ENCODE measurements at regions of chr16 and their contacts with region 1.

Region 1: GRCh38 chr16:86575754-86576557 is 2.4 kb upstream of the FOXL1 start:
- DNase-seq: peak; percentile 97
- H3K4me3 Mint-ChIP-seq: peak overlapping the region; percentile 76
- H3K27ac Mint-ChIP-seq: peak overlapping the region; percentile 88
- H3K4me1 Mint-ChIP-seq: peaks cover 56% of the 10 kb centered on the region
- H3K27me3 Mint-ChIP-seq: no peaks in the 10 kb centered on the region
- CTCF ChIP-seq: peak; percentile 84

Region 2: GRCh38 chr16:85808926-85809325 is 767.0 kb before region 1 on chr16:
- CTCF ChIA-PET with region 1: interaction called, 11 read pairs
- intact Hi-C with region 1: no loop called
- DNase-seq: no peak
- H3K4me3 Mint-ChIP-seq: no peak overlapping the region
- H3K27ac Mint-ChIP-seq: no peak overlapping the region
- H3K4me1 Mint-ChIP-seq: no peaks in the 10 kb centered on the region
- H3K27me3 Mint-ChIP-seq: peaks cover 40% of the 10 kb centered on the region
- CTCF ChIP-seq: no peak

Region 3: GRCh38 chr16:86498661-86499439 is 77.1 kb before region 1 on chr16:
- CTCF ChIA-PET with region 1: no interaction called
- intact Hi-C with region 1: no loop called
- DNase-seq: no peak
- H3K4me3 Mint-ChIP-seq: no peak overlapping the region
- H3K27ac Mint-ChIP-seq: no peak overlapping the region
- H3K4me1 Mint-ChIP-seq: peaks cover 8% of the 10 kb centered on the region
- H3K27me3 Mint-ChIP-seq: peaks cover 99% of the 10 kb centered on the region
- CTCF ChIP-seq: no peak

Region 4: DNA sequence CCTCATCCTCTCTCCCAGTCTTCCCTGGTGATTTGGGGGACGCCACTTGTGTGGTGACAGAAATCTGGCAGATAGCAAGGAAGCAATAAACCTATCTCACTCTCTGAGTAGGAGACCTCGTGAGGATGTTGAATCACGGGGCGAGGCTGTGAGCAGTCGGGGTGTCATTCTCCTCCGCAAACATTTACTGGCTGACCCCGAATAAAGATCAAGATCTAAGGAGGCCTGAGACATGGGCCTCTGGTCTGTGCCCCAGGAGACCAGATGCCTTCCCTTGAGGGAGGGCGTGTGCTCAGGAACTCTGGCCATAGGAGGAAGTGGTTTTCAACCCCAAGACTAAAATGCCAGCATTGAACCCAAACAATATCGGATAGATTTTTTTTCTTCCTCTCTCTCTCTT is 55.5 kb after region 1 on chr16:
- CTCF ChIA-PET with region 1: no interaction called
- intact Hi-C with region 1: loop called (anchors 2 kb)
- DNase-seq: peak; percentile 63
- H3K4me3 Mint-ChIP-seq: no peak overlapping the region
- H3K27ac Mint-ChIP-seq: peak overlapping the region; percentile 56
- H3K4me1 Mint-ChIP-seq: peaks cover 33% of the 10 kb centered on the region
- H3K27me3 Mint-ChIP-seq: no peaks in the 10 kb centered on the region
- CTCF ChIP-seq: no peak

Region 5: DNA sequence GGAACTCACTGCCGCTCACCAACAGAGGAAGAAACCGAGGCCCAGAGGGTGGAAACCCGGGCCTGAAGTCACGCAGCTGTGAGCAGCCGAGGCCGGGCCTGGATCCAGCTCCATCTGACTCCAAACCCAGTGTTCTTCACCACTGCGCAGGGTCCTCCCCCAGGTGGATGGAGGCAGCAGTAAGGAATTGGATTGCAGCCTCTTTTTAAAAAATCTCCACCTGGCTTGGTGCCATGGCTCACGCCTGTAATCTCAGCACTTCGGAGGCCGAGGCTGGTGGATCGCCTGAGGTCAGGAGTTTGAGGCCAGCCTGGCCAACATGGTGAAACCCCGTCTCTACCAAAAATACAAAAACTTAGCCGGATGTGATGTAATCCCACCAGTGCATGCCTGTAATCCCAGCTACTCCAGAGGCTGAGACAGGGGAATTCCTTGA is 179.6 kb after region 1 on chr16:
- CTCF ChIA-PET with region 1: interaction called, 22 read pairs
- intact Hi-C with region 1: loop called (anchors 2 kb)
- DNase-seq: no peak
- H3K4me3 Mint-ChIP-seq: no peak overlapping the region
- H3K27ac Mint-ChIP-seq: no peak overlapping the region
- H3K4me1 Mint-ChIP-seq: peaks cover 37% of the 10 kb centered on the region
- H3K27me3 Mint-ChIP-seq: no peaks in the 10 kb centered on the region
- CTCF ChIP-seq: no peak

Region 6: GRCh38 chr16:86834451-86835035 is 258.6 kb after region 1 on chr16:
- CTCF ChIA-PET with region 1: interaction called, 11 read pairs
- intact Hi-C with region 1: loop called (anchors 2 kb)
- DNase-seq: peak; percentile 70
- H3K4me3 Mint-ChIP-seq: no peak overlapping the region
- H3K27ac Mint-ChIP-seq: no peak overlapping the region
- H3K4me1 Mint-ChIP-seq: peaks cover 11% of the 10 kb centered on the region
- H3K27me3 Mint-ChIP-seq: peaks cover 17% of the 10 kb centered on the region
- CTCF ChIP-seq: peak; percentile 64

Region 7: DNA sequence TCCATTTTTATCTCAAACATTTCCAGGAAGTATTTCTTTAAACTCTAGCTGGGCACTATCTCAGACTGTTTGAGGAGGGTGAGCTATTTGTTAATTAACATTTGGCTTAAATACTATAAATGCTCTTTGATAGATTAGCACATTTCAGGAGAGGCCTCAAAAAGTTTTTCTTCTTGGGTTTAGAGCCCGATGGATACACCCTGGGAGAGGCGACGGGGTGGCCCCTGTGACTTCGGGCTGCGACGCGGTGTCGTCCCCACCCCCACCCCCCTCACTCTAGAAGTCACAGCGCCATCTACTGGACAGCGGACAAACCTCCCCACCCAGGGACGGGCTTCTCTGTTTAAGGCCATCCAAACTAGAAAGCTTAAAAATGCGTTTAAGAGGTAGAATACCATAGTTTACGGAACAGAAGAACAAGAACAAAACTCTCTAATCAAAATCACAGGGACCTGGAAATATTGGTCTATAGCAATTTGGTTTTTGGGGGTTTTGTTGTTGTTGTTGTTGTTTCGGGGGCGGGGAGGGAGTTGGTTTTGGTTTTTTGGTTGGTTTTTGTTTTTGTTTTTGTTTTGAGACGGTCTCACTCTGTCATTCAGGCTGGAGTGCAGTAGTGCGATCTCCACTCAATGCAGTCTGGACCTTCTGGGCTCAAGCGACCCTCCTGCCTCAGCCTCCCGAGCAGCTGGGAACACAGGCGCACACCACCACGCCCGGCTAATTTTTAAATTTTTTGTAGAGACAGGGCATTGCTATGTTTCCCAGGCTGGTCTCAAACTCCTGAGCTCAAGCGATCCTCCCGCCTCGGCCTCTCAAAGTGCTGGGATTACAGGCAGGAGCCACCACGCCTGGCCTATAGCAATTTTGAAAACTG is 486.9 kb after region 1 on chr16:
- CTCF ChIA-PET with region 1: interaction called, 11 read pairs
- intact Hi-C with region 1: no loop called
- DNase-seq: peak; percentile 78
- H3K4me3 Mint-ChIP-seq: no peak overlapping the region
- H3K27ac Mint-ChIP-seq: no peak overlapping the region
- H3K4me1 Mint-ChIP-seq: no peaks in the 10 kb centered on the region
- H3K27me3 Mint-ChIP-seq: peaks cover 81% of the 10 kb centered on the region
- CTCF ChIP-seq: peak; percentile 85